Mammary epithelial cell (primary cell): ENCODE measurements at regions of chr21 and their contacts with region 1.

Region 1: GRCh38 chr21:41948078-41948895 is 5.5 kb downstream of the C2CD2 start:
- DNase-seq: no peak
- H3K4me3 ChIP-seq: no peak overlapping the region
- H3K27ac ChIP-seq: no peak overlapping the region
- H3K4me1 ChIP-seq: peaks cover 33% of the 10 kb centered on the region
- H3K27me3 ChIP-seq: no peaks in the 10 kb centered on the region
- CTCF ChIP-seq: no peak

Region 2: GRCh38 chr21:42097860-42098454 is 149.7 kb after region 1 on chr21:
- CTCF ChIA-PET with region 1: no interaction called
- dilution Hi-C with region 1: no loop called
- in situ Hi-C with region 1: loop called in 1 of 2 experiments (anchors 10 kb)
- intact Hi-C with region 1: no loop called
- DNase-seq: peak; percentile 94
- H3K4me3 ChIP-seq: no peak overlapping the region
- H3K27ac ChIP-seq: peak overlapping the region; percentile 81
- H3K4me1 ChIP-seq: peaks cover 17% of the 10 kb centered on the region
- H3K27me3 ChIP-seq: no peaks in the 10 kb centered on the region
- CTCF ChIP-seq: no peak

Region 3: DNA sequence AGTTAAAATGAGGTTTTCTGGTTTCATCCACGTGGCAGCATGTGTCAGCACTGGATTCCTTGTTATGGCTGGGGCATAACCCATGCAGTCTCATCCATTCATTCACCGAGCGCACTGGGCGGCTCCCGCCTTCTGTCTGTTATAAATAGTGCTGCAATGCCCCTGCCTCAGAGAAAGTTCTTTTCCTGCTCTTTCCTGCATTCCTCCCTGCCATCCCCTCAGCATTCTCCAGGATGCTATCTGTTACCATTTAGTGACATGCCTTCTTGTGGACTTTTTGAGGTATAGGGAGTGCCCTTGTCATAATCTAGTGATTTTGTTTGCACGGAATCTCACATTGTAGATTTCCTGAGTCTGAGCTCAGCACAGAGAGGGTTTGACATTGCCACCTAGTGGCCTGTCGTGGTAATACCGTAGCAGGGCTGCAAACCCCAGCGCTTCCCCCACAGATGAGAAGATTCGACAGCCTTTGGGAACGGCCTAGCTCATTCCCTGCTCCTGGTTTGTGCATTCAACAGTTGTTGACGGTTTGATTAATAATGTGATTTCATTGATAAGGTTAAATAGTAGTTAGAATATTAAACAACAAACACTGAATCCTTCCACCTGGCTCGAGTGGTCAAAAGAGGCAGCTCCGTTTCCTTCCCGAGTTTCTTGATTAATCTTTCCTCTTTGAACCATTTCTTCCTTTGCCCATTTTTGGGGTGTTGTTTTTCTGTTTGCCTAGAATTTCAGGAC is 169.1 kb after region 1 on chr21:
- CTCF ChIA-PET with region 1: interaction called, 3 read pairs
- dilution Hi-C with region 1: no loop called
- in situ Hi-C with region 1: loop called in 1 of 2 experiments (anchors 10 kb)
- intact Hi-C with region 1: no loop called
- DNase-seq: peak; percentile 48
- H3K4me3 ChIP-seq: no peak overlapping the region
- H3K27ac ChIP-seq: no peak overlapping the region
- H3K4me1 ChIP-seq: peaks cover 13% of the 10 kb centered on the region
- H3K27me3 ChIP-seq: no peaks in the 10 kb centered on the region
- CTCF ChIP-seq: peak; percentile 91 to 94